Common myeloid progenitor, CD34-positive (primary cell): ENCODE measurements at regions of chr1 and their contacts with region 1.

Region 1: DNA sequence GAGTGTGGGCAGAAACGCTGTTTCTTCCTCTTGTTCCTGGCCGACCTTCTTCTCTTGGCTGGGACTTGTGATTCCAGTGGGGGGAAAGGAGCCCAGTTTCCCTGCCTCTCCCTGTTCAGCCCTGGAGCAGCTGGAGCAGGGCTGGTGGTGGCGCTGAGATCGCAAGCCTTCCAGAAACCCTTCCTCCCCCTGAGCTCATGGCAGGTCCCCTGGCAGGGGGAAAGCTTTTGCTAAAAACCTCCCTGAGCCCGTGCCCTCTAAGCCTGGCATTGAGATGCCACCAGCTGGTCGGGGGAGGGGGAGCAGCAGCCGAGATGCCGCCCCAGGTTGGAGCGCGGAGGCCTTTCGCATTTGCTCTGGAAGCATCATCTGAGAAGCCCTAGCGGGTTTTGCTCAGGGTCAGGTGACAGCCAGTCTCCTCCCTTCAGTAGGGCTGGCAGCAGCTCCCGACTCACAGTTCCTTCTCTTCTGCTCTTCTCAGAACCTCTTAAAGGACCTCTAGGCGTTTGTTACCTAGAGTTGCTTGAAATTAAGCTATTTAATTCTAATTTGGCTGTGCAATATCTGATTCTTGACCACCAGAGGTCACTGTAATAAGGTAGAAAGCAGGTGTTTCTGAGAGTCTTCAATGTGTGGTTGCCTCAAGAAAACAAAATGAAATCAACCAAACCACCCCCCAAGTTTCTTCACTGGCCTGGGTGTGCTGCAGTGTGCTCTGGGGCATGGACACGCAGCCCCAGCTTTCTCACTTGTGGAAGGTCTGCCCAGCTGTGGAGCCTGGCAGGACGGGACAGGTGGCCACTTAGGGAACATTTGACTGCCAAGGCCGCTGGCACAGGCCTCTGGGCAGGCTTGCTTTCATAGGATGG is 257.3 kb downstream of the CAMTA1 start:
- DNase-seq: peak; percentile 35 to 69 (median 64)
- H3K4me3 ChIP-seq: no peak overlapping the region
- H3K27ac ChIP-seq: no peak overlapping the region
- H3K4me1 ChIP-seq: no peaks in the 10 kb centered on the region
- H3K27me3 ChIP-seq: peaks cover 0 to 10% (median 2%) of the 10 kb centered on the region in 5 experiments

Region 2: GRCh38 chr1:7070389-7071029 is 28.0 kb after region 1 on chr1:
- CTCF ChIA-PET with region 1: interaction called, 10 read pairs
- POLR2A ChIA-PET with region 1: no interaction called
- DNase-seq: peak; percentile 45 to 70 (median 67)
- H3K4me3 ChIP-seq: peak overlapping the region in 1 of 7 experiments; percentile 42
- H3K27ac ChIP-seq: no peak overlapping the region
- H3K4me1 ChIP-seq: peaks cover 0 to 6% (median 2%) of the 10 kb centered on the region in 4 experiments
- H3K27me3 ChIP-seq: peaks cover 0 to 36% (median 14%) of the 10 kb centered on the region in 5 experiments

Region 3: DNA sequence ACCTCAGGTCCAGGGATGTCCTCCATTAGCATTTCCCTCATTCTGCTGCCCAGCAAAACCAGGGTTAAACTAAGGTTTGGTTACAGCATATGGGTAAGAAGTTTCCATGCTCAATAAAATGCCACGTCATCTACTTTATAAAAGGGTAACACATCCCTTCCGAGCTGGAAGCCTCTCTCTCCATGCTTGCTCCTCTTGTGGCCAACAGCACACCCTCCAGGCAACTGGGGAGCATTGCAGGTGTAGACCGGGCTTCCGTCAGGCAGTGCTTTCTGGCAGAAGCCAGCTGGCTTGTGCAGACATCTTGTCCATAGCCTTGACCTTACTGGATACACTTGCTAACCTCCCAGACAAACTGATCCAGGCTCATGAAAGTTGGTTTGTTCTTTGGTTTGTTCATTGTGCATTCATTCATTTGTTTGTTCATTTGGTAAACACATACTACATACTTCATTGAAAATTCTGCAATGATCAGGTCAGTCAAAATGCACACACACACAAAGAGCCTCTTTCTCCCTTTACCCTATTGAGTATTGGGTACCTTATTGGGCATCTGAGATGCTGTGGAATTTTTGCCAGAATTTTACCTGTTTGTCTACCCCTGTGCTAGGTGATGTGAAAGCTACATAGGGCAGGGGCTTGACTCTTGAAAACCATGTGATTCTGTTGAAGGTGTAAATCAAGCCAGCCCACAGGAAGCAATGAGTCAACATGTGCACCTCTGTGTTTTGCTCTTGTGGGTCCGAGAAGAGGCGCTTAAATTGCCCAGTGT is 165.5 kb after region 1 on chr1:
- CTCF ChIA-PET with region 1: interaction called, 51 read pairs
- POLR2A ChIA-PET with region 1: no interaction called
- DNase-seq: peak; percentile 81 to 91 (median 89)
- H3K4me3 ChIP-seq: no peak overlapping the region
- H3K27ac ChIP-seq: no peak overlapping the region
- H3K4me1 ChIP-seq: peaks cover 0 to 4% (median 0%) of the 10 kb centered on the region in 4 experiments
- H3K27me3 ChIP-seq: peaks cover 0 to 9% (median 7%) of the 10 kb centered on the region in 5 experiments